ENCODE measurements at regions of chr6 and their contacts with region 1.

Region 1: DNA sequence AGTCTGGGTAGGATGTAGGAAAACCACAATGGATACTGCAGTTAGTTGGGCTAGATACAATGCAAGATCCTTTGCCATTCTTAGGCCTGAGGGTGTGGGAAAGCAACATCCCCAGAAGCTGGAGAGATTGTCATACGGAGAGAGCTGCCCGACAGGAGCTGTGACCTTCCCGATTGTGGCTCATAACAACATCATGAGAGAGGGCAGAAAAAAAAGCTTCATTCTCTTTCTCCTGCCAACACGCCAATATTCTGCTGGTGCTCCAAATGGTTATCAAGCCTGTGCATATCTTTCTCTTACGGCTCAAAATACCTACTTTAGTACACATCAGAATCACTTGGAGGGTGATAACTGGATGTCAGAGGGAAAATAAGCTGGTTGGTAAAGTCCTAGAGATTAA is 81.1 kb downstream of the IBTK start:
- DNase-seq: peak in 1 of 2 donors; percentile 35
- ATAC-seq: peak; percentile 69 to 93 (median 84)
- H3K4me3 ChIP-seq: no peak overlapping the region
- H3K27ac ChIP-seq: peak overlapping the region; percentile 2 to 78 (median 60)
- H3K4me1 ChIP-seq: peaks cover 0 to 11% (median 0%) of the 10 kb centered on the region in 9 donors
- H3K27me3 ChIP-seq: no peaks in the 10 kb centered on the region
- CTCF ChIP-seq: no peak

Region 2: GRCh38 chr6:81948861-81949260 is 217.6 kb before region 1 on chr6:
- intact Hi-C with region 1: loop called in 1 of 10 experiments (anchors 5 kb)
- DNase-seq: no peak
- ATAC-seq: no peak
- H3K4me3 ChIP-seq: no peak overlapping the region
- H3K27ac ChIP-seq: no peak overlapping the region
- H3K4me1 ChIP-seq: peaks cover 0 to 8% (median 0%) of the 10 kb centered on the region in 9 donors
- H3K27me3 ChIP-seq: no peaks in the 10 kb centered on the region
- CTCF ChIP-seq: no peak

Region 3: DNA sequence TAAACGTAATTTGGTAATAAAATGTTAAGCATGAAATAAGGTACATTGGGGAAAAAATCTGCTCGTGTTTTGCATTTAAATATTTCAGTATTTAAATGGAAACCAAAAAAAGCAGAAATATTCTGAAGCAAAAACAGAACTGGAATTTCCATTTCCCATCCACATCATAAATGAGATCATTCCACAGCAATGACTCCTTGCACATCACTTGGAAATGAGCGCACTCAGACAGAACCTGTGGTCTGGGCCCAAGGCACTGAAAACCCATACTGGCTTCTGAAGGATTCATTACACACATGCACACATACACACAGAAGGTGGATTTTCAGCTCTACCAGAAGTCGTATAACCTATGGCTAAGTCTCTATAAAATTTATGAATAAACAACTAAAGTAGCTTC is 93.7 kb before region 1 on chr6:
- intact Hi-C with region 1: loop called in 3 of 10 experiments (anchors 5 to 10 kb)
- DNase-seq: no peak
- ATAC-seq: peak in 1 of 8 donors; percentile 23
- H3K4me3 ChIP-seq: no peak overlapping the region
- H3K27ac ChIP-seq: no peak overlapping the region
- H3K4me1 ChIP-seq: peaks cover 0 to 30% (median 5%) of the 10 kb centered on the region in 9 donors
- H3K27me3 ChIP-seq: no peaks in the 10 kb centered on the region
- CTCF ChIP-seq: no peak

Region 4: DNA sequence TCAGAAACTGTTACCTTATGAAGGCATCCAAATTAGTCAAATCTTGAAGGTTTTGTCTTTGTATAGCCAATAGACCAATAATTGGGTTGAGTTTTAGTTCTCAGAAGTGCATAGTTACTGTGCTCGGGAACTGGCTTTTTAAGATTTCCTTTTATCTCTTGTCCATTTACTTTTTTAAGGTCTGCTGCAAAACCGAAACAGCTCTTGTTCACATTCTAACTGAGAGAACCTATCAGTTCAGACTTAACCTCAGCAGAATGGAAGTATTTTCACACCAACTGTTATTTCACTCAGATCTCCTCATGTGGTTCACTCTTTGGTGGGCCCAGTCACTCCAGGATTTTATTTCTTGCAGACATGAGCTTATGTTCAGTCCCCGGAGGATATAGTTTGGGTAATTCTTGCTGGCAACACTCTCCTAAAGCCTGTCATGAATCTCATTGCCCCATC is 252.7 kb after region 1 on chr6:
- intact Hi-C with region 1: no loop called
- DNase-seq: no peak
- ATAC-seq: no peak
- H3K4me3 ChIP-seq: no peak overlapping the region
- H3K27ac ChIP-seq: no peak overlapping the region
- H3K4me1 ChIP-seq: no peaks in the 10 kb centered on the region
- H3K27me3 ChIP-seq: no peaks in the 10 kb centered on the region
- CTCF ChIP-seq: no peak

Region 5: GRCh38 chr6:82872185-82872584 is 705.7 kb after region 1 on chr6:
- intact Hi-C with region 1: no loop called
- DNase-seq: no peak
- ATAC-seq: no peak
- H3K4me3 ChIP-seq: no peak overlapping the region
- H3K27ac ChIP-seq: no peak overlapping the region
- H3K4me1 ChIP-seq: no peaks in the 10 kb centered on the region
- H3K27me3 ChIP-seq: no peaks in the 10 kb centered on the region
- CTCF ChIP-seq: no peak

Region 6: GRCh38 chr6:82924799-82925535 is 758.5 kb after region 1 on chr6:
- intact Hi-C with region 1: no loop called
- DNase-seq: no peak
- ATAC-seq: no peak
- H3K4me3 ChIP-seq: no peak overlapping the region
- H3K27ac ChIP-seq: no peak overlapping the region
- H3K4me1 ChIP-seq: no peaks in the 10 kb centered on the region
- H3K27me3 ChIP-seq: no peaks in the 10 kb centered on the region
- CTCF ChIP-seq: no peak